Ovary (tissue), 10 donors: ENCODE measurements at regions of chr1 and their contacts with region 1.

Region 1: GRCh38 chr1:90210631-90211491 is 216.0 kb downstream of the ZNF326 start:
- DNase-seq: no peak
- H3K4me3 ChIP-seq: no peak overlapping the region
- H3K27ac ChIP-seq: no peak overlapping the region
- H3K4me1 ChIP-seq: no peaks in the 10 kb centered on the region
- H3K27me3 ChIP-seq: no peaks in the 10 kb centered on the region
- CTCF ChIP-seq: no peak
- EP300 ChIP-seq: no peak
- POLR2A ChIP-seq: no peak

Region 2: GRCh38 chr1:88877382-88877825 is 1333.5 kb before region 1 on chr1:
- intact Hi-C with region 1: loop called in 1 of 4 experiments (anchors 5 kb)
- DNase-seq: no peak
- H3K4me3 ChIP-seq: no peak overlapping the region
- H3K27ac ChIP-seq: no peak overlapping the region
- H3K4me1 ChIP-seq: no peaks in the 10 kb centered on the region
- H3K27me3 ChIP-seq: no peaks in the 10 kb centered on the region
- CTCF ChIP-seq: peak; percentile 19 to 28 (median 25)
- EP300 ChIP-seq: no peak
- POLR2A ChIP-seq: no peak

Region 3: GRCh38 chr1:90236493-90236892 is 25.6 kb after region 1 on chr1:
- intact Hi-C with region 1: no loop called
- DNase-seq: no peak
- H3K4me3 ChIP-seq: no peak overlapping the region
- H3K27ac ChIP-seq: no peak overlapping the region
- H3K4me1 ChIP-seq: no peaks in the 10 kb centered on the region
- H3K27me3 ChIP-seq: no peaks in the 10 kb centered on the region
- CTCF ChIP-seq: no peak
- EP300 ChIP-seq: no peak
- POLR2A ChIP-seq: no peak